PC-9 (cell line): ENCODE measurements at regions of chr5 and their contacts with region 1.

Region 1: GRCh38 chr5:78235289-78235688 is 59.2 kb downstream of the AP3B1 start:
- DNase-seq: no peak
- H3K4me3 ChIP-seq: no peak overlapping the region
- H3K27ac ChIP-seq: no peak overlapping the region
- H3K4me1 ChIP-seq: no peaks in the 10 kb centered on the region
- H3K27me3 ChIP-seq: no peaks in the 10 kb centered on the region
- CTCF ChIP-seq: no peak

Region 2: GRCh38 chr5:76920491-76920890 is 1314.8 kb before region 1 on chr5:
- CTCF ChIA-PET with region 1: no interaction called
- POLR2A ChIA-PET with region 1: interaction called, 19 read pairs
- intact Hi-C with region 1: no loop called
- DNase-seq: no peak
- H3K4me3 ChIP-seq: no peak overlapping the region
- H3K27ac ChIP-seq: no peak overlapping the region
- H3K4me1 ChIP-seq: no peaks in the 10 kb centered on the region
- H3K27me3 ChIP-seq: no peaks in the 10 kb centered on the region
- CTCF ChIP-seq: no peak